ENCODE measurements at regions of chrX and their contacts with region 1.

Region 1: DNA sequence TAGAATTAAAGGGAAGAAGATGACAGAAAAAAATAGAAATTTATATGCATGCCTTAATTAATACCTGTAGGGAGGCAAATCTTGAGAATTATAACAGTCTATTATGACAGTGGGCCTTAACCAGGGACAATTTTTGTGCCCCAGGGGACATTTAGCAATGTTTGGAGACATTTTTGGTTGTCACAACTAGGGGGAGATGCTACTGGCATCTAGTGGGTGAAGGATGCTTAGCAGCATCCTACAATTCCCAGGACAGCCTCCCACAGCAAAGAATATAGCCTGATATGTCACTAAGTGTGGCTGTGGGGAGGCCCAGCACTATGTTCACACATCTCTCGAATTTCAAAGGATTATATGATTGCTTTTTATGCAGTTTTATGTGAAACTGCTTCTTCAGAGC is 10.5 kb downstream of the GPR82 start:
- DNase-seq: no peak
- H3K4me3 ChIP-seq: no peak overlapping the region
- H3K4me3 Mint-ChIP-seq: no peak overlapping the region
- H3K27ac ChIP-seq: no peak overlapping the region
- H3K27ac Mint-ChIP-seq: peak overlapping the region in 2 of 7 donors; percentile 38 to 78
- H3K4me1 ChIP-seq: no peaks in the 10 kb centered on the region
- H3K4me1 Mint-ChIP-seq: peaks cover 7 to 19% (median 10%) of the 10 kb centered on the region in 4 donors
- H3K27me3 ChIP-seq: no peaks in the 10 kb centered on the region
- H3K27me3 Mint-ChIP-seq: no peaks in the 10 kb centered on the region

Region 2: GRCh38 chrX:41558531-41558930 is 176.0 kb before region 1 on chrX:
- CTCF ChIA-PET with region 1: no interaction called
- POLR2A ChIA-PET with region 1: no interaction called
- intact Hi-C with region 1: loop called (anchors 10 kb)
- DNase-seq: peak in 1 of 5 donors; percentile 25
- H3K4me3 ChIP-seq: no peak overlapping the region
- H3K4me3 Mint-ChIP-seq: no peak overlapping the region
- H3K27ac ChIP-seq: no peak overlapping the region
- H3K27ac Mint-ChIP-seq: peak overlapping the region in 6 of 7 donors; percentile 18 to 95 (median 72)
- H3K4me1 ChIP-seq: peaks cover 57% of the 10 kb centered on the region
- H3K4me1 Mint-ChIP-seq: peaks cover 25 to 52% (median 31%) of the 10 kb centered on the region in 4 donors
- H3K27me3 ChIP-seq: no peaks in the 10 kb centered on the region
- H3K27me3 Mint-ChIP-seq: no peaks in the 10 kb centered on the region

Region 3: GRCh38 chrX:41661366-41662095 is 73.0 kb before region 1 on chrX:
- CTCF ChIA-PET with region 1: no interaction called
- POLR2A ChIA-PET with region 1: no interaction called
- intact Hi-C with region 1: no loop called
- DNase-seq: no peak
- H3K4me3 ChIP-seq: no peak overlapping the region
- H3K4me3 Mint-ChIP-seq: no peak overlapping the region
- H3K27ac ChIP-seq: no peak overlapping the region
- H3K27ac Mint-ChIP-seq: no peak overlapping the region
- H3K4me1 ChIP-seq: peaks cover 6% of the 10 kb centered on the region
- H3K4me1 Mint-ChIP-seq: peaks cover 2 to 9% (median 5%) of the 10 kb centered on the region in 4 donors
- H3K27me3 ChIP-seq: no peaks in the 10 kb centered on the region
- H3K27me3 Mint-ChIP-seq: no peaks in the 10 kb centered on the region

Region 4: DNA sequence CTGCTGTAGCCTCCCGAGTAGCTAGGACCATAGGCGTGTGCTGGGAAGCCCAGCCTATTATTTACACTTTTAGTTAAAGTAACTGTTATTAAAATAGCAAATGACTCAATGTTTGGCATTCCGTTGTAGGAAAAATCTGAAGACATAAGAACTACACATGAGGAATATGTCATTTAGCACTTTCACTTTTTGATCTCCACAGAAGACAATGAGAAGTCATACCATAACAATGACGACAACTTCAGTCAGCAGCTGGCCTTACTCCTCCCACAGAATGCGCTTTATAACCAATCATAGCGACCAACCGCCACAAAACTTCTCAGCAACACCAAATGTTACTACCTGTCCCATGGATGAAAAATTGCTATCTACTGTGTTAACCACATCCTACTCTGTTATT is 39.1 kb before region 1 on chrX:
- CTCF ChIA-PET with region 1: no interaction called
- POLR2A ChIA-PET with region 1: no interaction called
- intact Hi-C with region 1: no loop called
- DNase-seq: peak; percentile 18 to 61 (median 35)
- H3K4me3 ChIP-seq: no peak overlapping the region
- H3K4me3 Mint-ChIP-seq: peak overlapping the region in 2 of 8 donors; percentile 31 to 48
- H3K27ac ChIP-seq: no peak overlapping the region
- H3K27ac Mint-ChIP-seq: peak overlapping the region in 4 of 7 donors; percentile 10 to 65 (median 14)
- H3K4me1 ChIP-seq: peaks cover 27% of the 10 kb centered on the region
- H3K4me1 Mint-ChIP-seq: peaks cover 24 to 46% (median 28%) of the 10 kb centered on the region in 4 donors
- H3K27me3 ChIP-seq: no peaks in the 10 kb centered on the region
- H3K27me3 Mint-ChIP-seq: no peaks in the 10 kb centered on the region

Measured in CD4-positive, alpha-beta memory T cell (primary cell).